Mucosa of descending colon (tissue), 3 donors: ENCODE measurements at regions of chr3 and their contacts with region 1.

Region 1: GRCh38 chr3:101573449-101574387 is at the start of gene PCNP:
- DNase-seq: peak; percentile 99 to 100 (median 99)
- ATAC-seq: peak; percentile 96
- H3K4me3 ChIP-seq: peak within 1 kb of the TSS; percentile 95
- H3K4me1 ChIP-seq: peaks cover 19% of the 10 kb centered on the region
- CTCF ChIP-seq: peak; percentile 78
- total RNA-seq, gene PCNP: 78.0 to 168 (median 94.3) TPM

Region 2: DNA sequence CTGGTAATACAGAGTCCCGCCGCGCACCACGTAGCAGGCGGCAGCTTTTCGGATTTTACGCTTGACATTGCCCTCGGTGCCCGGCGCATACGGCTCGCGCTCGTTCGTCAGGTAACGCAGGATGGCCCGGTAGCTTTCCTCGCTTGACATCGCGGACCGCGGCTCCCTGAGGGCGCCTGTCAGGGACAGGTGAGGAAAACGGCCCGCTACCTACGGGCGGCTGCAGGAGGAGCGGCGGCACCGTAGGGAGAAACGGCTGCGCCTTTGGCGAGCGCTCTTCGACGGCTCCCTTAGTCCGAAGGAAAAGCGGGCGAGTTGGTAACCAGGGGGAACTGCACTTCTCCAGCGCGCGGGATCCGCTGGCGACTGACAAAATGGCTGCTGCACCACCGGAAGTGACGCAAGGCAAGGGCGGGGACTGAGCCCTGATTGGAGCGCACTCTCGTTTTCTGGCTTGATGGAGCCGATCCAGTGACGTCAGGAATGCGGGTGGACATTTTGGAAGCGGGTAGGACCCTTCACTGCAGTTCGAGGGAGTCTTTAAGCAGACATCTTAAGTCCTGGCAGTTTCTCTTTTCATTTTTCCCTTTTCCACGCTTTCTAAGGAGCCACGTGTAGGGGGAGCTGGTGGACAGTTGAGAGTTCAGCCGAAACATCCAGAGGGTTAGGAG is 103.2 kb after region 1 on chr3 and contains the start of gene ZBTB11:
- intact Hi-C with region 1: loop called in 1 of 2 experiments (anchors 10 kb)
- DNase-seq: peak; percentile 99 to 100 (median 100)
- ATAC-seq: peak; percentile 88
- H3K4me3 ChIP-seq: peak within 1 kb of the TSS; percentile 91
- H3K4me1 ChIP-seq: peaks cover 19% of the 10 kb centered on the region
- CTCF ChIP-seq: peak; percentile 34
- total RNA-seq, gene ZBTB11: 13.0 to 19.4 (median 13.1) TPM